CD14-positive monocyte (primary cell): ENCODE measurements at regions of chr7 and their contacts with region 1.

Region 1: DNA sequence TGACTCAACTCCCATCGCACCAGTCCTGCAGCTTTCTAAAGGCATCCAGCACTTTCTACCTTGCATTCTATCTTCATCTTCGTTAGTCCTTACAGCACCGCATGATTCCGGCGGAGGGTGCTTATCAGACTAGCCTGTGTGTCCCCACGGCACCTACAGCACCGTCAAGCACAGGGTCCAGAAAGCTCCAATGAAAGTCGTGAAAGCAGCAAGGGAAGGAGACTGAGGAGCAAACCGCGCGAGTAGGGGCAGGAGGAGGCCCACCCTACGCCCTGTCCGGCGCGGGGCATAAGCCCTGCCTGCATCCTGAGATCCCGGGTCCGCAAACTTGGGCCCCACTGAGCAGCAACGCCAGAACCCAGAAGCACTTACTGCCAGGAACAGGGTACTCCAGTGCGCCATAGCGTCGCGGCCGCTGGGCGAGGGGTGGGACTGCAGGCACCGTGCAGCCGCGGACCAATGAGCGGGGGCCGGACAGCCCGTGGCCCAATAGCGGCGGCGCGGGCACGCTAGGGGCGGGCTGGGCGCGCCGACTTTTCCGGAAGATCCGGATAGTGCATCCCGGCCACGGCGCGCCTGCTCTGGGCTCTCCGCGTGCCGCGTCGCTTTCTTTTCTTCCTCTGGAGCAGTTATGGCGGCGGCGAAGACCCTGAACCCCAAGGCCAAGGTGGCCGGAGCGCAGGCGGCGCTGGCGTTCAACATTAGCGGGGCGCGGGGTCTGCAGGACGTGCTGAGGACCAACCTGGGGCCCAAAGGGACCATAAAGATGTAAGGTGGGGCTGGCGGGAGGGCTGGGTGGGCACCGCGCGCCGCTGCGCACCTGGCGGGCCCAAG is 122.1 kb upstream of the VKORC1L1 start:
- DNase-seq: peak; percentile 81 to 90 (median 83)
- H3K4me3 ChIP-seq: peak overlapping the region; percentile 76 to 96 (median 89)
- H3K4me3 Mint-ChIP-seq: peak overlapping the region; percentile 87 to 98
- H3K27ac ChIP-seq: peak overlapping the region; percentile 51 to 90
- H3K27ac Mint-ChIP-seq: peak overlapping the region; percentile 89 to 94 (median 90)
- H3K4me1 ChIP-seq: peaks cover 11 to 12% of the 10 kb centered on the region in 2 donors
- H3K4me1 Mint-ChIP-seq: peaks cover 15% of the 10 kb centered on the region
- H3K27me3 ChIP-seq: no peaks in the 10 kb centered on the region
- H3K27me3 Mint-ChIP-seq: peaks cover 0 to 2% (median 0%) of the 10 kb centered on the region in 3 donors
- CTCF ChIP-seq: no peak

Region 2: DNA sequence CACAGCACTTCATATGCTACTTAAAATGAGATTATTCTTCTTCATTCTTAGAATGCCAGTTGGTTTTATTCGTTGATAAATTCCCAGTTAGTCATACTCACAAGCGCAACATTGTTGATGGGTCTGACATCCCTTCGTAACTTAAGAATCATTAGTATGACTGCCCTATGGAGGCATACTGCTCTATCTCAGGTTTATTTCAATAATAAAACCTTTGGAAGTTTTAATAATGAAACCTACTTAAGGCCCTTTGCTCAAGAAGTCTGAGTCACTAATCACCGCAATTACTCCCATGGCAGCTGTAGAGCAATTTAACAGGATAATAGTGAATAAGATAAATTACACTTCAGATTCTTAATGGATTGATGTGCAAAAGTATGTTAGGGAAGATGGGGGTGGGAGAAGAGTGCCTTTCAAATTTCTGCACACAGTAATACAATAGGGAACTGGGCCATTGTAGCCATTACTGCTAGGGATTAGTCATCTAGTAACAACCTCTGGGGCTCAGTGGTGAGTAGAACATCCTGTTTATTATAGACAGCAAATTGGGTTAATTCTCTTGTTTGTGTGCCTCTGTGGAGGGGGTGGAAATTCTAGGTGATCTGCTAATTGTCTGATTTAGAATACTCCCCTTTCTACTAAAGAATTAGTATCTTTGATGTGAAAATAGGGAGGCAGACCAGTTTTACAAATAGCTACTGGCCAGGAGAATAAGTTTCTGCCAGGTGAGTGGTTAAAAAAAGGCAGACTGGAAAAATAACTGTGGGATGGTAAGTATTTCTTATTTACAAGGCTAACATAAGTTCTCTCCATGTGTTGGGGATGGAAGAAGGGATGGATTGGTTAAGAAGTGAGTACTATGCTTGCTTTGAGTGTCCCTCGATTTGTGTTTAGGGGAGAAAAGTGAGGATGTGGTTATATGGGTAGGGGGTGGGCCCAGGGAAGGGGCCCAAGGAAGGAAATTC is 47.7 kb after region 1 on chr7:
- intact Hi-C with region 1: no loop called
- DNase-seq: no peak
- H3K4me3 ChIP-seq: no peak overlapping the region
- H3K4me3 Mint-ChIP-seq: no peak overlapping the region
- H3K27ac ChIP-seq: no peak overlapping the region
- H3K27ac Mint-ChIP-seq: no peak overlapping the region
- H3K4me1 ChIP-seq: no peaks in the 10 kb centered on the region
- H3K4me1 Mint-ChIP-seq: no peaks in the 10 kb centered on the region
- H3K27me3 ChIP-seq: no peaks in the 10 kb centered on the region
- H3K27me3 Mint-ChIP-seq: peaks cover 0 to 2% (median 2%) of the 10 kb centered on the region in 3 donors
- CTCF ChIP-seq: no peak

Region 3: GRCh38 chr7:66583490-66584110 is 832.9 kb after region 1 on chr7:
- intact Hi-C with region 1: no loop called
- DNase-seq: peak; percentile 35 to 68 (median 47)
- H3K4me3 ChIP-seq: no peak overlapping the region
- H3K4me3 Mint-ChIP-seq: no peak overlapping the region
- H3K27ac ChIP-seq: peak overlapping the region in 1 of 2 donors; percentile 74
- H3K27ac Mint-ChIP-seq: peak overlapping the region in 6 of 7 donors; percentile 43 to 89 (median 84)
- H3K4me1 ChIP-seq: peaks cover 0 to 8% of the 10 kb centered on the region in 2 donors
- H3K4me1 Mint-ChIP-seq: peaks cover 10% of the 10 kb centered on the region
- H3K27me3 ChIP-seq: no peaks in the 10 kb centered on the region
- H3K27me3 Mint-ChIP-seq: peaks cover 0 to 1% (median 0%) of the 10 kb centered on the region in 3 donors
- CTCF ChIP-seq: no peak

Region 4: GRCh38 chr7:67302113-67303039 is 1551.6 kb after region 1 on chr7:
- intact Hi-C with region 1: loop called in 1 of 2 experiments (anchors 10 kb)
- DNase-seq: peak; percentile 99
- H3K4me3 ChIP-seq: peak overlapping the region; percentile 81 to 85 (median 84)
- H3K4me3 Mint-ChIP-seq: peak overlapping the region; percentile 84 to 92
- H3K27ac ChIP-seq: peak overlapping the region; percentile 94 to 95
- H3K27ac Mint-ChIP-seq: peak overlapping the region; percentile 94 to 99 (median 97)
- H3K4me1 ChIP-seq: peaks cover 23 to 25% of the 10 kb centered on the region in 2 donors
- H3K4me1 Mint-ChIP-seq: peaks cover 37% of the 10 kb centered on the region
- H3K27me3 ChIP-seq: no peaks in the 10 kb centered on the region
- H3K27me3 Mint-ChIP-seq: peaks cover 0 to 2% (median 0%) of the 10 kb centered on the region in 3 donors
- CTCF ChIP-seq: peak; percentile 17